ENCODE measurements at regions of chr13 and their contacts with region 1.

Region 1: GRCh38 chr13:77595166-77595810 is 59.8 kb downstream of the SCEL start:
- DNase-seq: no peak
- H3K4me3 ChIP-seq: no peak overlapping the region
- H3K27ac ChIP-seq: no peak overlapping the region
- H3K4me1 ChIP-seq: no peaks in the 10 kb centered on the region
- H3K27me3 ChIP-seq: no peaks in the 10 kb centered on the region

Region 2: GRCh38 chr13:77660841-77661250 is 65.6 kb after region 1 on chr13:
- CTCF ChIA-PET with region 1: no interaction called
- POLR2A ChIA-PET with region 1: no interaction called
- DNase-seq: no peak
- H3K4me3 ChIP-seq: no peak overlapping the region
- H3K27ac ChIP-seq: no peak overlapping the region
- H3K4me1 ChIP-seq: no peaks in the 10 kb centered on the region
- H3K27me3 ChIP-seq: no peaks in the 10 kb centered on the region

Region 3: GRCh38 chr13:77751513-77752456 is 156.5 kb after region 1 on chr13:
- CTCF ChIA-PET with region 1: interaction called, 29 read pairs
- POLR2A ChIA-PET with region 1: no interaction called
- DNase-seq: peak; percentile 62 to 81 (median 77)
- H3K4me3 ChIP-seq: no peak overlapping the region
- H3K27ac ChIP-seq: no peak overlapping the region
- H3K4me1 ChIP-seq: no peaks in the 10 kb centered on the region
- H3K27me3 ChIP-seq: no peaks in the 10 kb centered on the region

Region 4: DNA sequence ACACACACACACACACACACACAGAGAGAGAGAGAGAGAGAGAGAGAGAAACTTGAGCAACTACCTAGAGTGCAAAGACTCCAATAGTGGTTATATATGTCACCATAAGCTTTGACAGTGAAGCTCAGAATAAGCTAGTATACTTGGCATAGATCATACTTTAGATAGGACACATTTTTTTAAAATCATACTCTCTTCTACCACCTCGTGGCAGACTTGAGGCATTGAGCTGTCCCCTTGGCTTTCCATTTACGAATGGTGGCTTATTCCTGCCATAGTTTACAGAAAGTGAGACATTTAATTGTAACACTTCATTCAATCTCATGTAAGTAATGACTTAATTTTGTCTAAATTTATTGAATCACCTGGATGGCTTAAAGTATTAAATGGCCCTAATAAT is 215.1 kb after region 1 on chr13:
- CTCF ChIA-PET with region 1: no interaction called
- POLR2A ChIA-PET with region 1: no interaction called
- DNase-seq: peak; percentile 48 to 60 (median 50)
- H3K4me3 ChIP-seq: no peak overlapping the region
- H3K27ac ChIP-seq: no peak overlapping the region
- H3K4me1 ChIP-seq: peaks cover 4 to 13% (median 7%) of the 10 kb centered on the region in 4 experiments
- H3K27me3 ChIP-seq: no peaks in the 10 kb centered on the region